ENCODE measurements at regions of chr20 and their contacts with region 1.

Region 1: GRCh38 chr20:4108495-4109306 is 93.3 kb upstream of the RNF24 start:
- DNase-seq: peak; percentile 91 to 95
- ATAC-seq: peak; percentile 79 to 87
- H3K4me3 ChIP-seq: no peak overlapping the region
- H3K27ac ChIP-seq: peak overlapping the region; percentile 94 to 96
- H3K4me1 ChIP-seq: peaks cover 54% of the 10 kb centered on the region
- CTCF ChIP-seq: peak; percentile 100
- EP300 ChIP-seq: peak in 1 of 2 experiments; percentile 50; a peak in 1 of 5 replicates
- POLR2A ChIP-seq: no peak
- RAD21 ChIP-seq: peak; percentile 100

Region 2: GRCh38 chr20:4069751-4070150 is 39.0 kb before region 1 on chr20:
- CTCF ChIA-PET with region 1: interaction called, 12 read pairs
- POLR2A ChIA-PET with region 1: no interaction called
- DNase-seq: no peak
- ATAC-seq: no peak
- H3K4me3 ChIP-seq: no peak overlapping the region
- H3K27ac ChIP-seq: no peak overlapping the region
- H3K4me1 ChIP-seq: peaks cover 15% of the 10 kb centered on the region
- CTCF ChIP-seq: no peak
- EP300 ChIP-seq: no peak
- POLR2A ChIP-seq: no peak
- RAD21 ChIP-seq: no peak

Region 3: GRCh38 chr20:4119854-4120209 is 11.1 kb after region 1 on chr20:
- CTCF ChIA-PET with region 1: interaction called, 69 read pairs
- POLR2A ChIA-PET with region 1: no interaction called
- DNase-seq: no peak
- ATAC-seq: peak; percentile 74 to 77
- H3K4me3 ChIP-seq: peak overlapping the region; percentile 8; the same call in 1 of the 3 replicates
- H3K27ac ChIP-seq: peak overlapping the region; percentile 86 to 89
- H3K4me1 ChIP-seq: peaks cover 68% of the 10 kb centered on the region
- CTCF ChIP-seq: no peak
- EP300 ChIP-seq: no peak; a peak in 1 of 5 replicates
- POLR2A ChIP-seq: no peak
- RAD21 ChIP-seq: no peak; a peak in 1 of 5 replicates

Region 4: GRCh38 chr20:4152006-4152695 is 43.5 kb after region 1 on chr20:
- CTCF ChIA-PET with region 1: interaction called, 65 read pairs
- POLR2A ChIA-PET with region 1: interaction called, 3 read pairs
- DNase-seq: no peak
- ATAC-seq: no peak
- H3K4me3 ChIP-seq: peak overlapping the region; percentile 93
- H3K27ac ChIP-seq: peak overlapping the region; percentile 53 to 97
- H3K4me1 ChIP-seq: peaks cover 80% of the 10 kb centered on the region
- CTCF ChIP-seq: no peak
- EP300 ChIP-seq: no peak
- POLR2A ChIP-seq: no peak
- RAD21 ChIP-seq: no peak

Region 5: DNA sequence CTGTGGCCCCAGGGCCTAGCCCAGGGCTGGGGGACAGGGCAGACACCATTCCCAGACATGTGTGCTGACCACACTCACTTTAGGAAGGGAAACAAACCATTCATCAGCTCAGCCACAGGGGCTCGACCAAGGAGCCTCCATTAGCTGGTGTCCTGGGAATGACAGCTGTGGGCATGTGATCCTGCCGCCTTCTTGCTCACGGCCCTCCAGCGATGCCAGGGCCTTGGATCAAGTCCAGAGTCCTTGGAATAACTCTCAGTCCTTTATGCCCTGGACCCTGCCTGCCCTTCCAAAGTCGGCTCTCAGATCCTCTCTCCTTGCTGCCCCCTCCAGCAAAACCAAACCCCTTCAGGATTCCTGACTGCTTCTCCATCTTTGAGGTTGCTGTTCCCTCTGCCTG is 71.7 kb after region 1 on chr20:
- CTCF ChIA-PET with region 1: interaction called, 62 read pairs
- POLR2A ChIA-PET with region 1: no interaction called
- DNase-seq: no peak
- ATAC-seq: no peak
- H3K4me3 ChIP-seq: no peak overlapping the region
- H3K27ac ChIP-seq: peak overlapping the region in 1 of 2 experiments; percentile 40; a peak in 3 of 6 replicates
- H3K4me1 ChIP-seq: no peaks in the 10 kb centered on the region; the same call in 2 of the 3 replicates
- CTCF ChIP-seq: no peak
- EP300 ChIP-seq: no peak
- POLR2A ChIP-seq: no peak
- RAD21 ChIP-seq: no peak

Region 6: GRCh38 chr20:4217349-4217773 is 108.7 kb after region 1 on chr20:
- CTCF ChIA-PET with region 1: interaction called, 14 read pairs
- POLR2A ChIA-PET with region 1: no interaction called
- DNase-seq: peak; percentile 69 to 84
- ATAC-seq: peak; percentile 44 to 77; a peak in 4 of 6 replicates
- H3K4me3 ChIP-seq: no peak overlapping the region
- H3K27ac ChIP-seq: peak overlapping the region; percentile 53 to 82; a peak in 5 of 6 replicates
- H3K4me1 ChIP-seq: peaks cover 43% of the 10 kb centered on the region
- CTCF ChIP-seq: no peak
- EP300 ChIP-seq: no peak
- POLR2A ChIP-seq: no peak
- RAD21 ChIP-seq: no peak